ENCODE measurements at regions of chr15 and their contacts with region 1.

Region 1: DNA sequence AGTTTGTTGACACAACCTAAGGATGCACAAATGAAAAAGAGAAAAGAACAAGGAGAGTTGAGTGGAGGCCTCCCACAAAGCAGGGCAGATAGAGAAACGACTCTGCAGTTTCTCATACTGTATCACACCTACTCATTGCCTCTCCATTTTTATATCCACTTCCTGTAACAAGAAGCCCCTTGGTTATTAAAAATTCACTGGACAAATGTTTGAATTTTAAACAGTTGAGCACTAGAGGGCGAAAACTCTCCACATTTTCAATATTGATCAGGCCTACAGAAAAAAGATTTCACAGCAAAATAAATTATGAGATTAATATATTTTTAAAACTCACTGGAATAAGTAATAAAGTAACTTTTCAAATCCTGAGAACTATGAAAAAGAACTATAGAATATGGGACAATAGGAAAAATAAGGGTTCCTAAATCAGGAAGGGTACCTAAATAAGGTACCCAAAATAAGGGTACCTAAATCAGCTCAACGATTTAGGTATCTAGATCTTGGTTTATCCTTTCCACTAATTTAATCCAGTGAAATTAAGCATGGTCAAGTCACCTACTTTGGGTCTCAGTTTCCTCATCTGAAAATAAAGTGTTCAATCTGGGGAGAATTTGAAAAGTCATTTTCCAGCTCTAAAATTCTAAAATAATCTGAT is 47.0 kb upstream of the PPIB start:
- DNase-seq: peak in 3 of 4 experiments; percentile 17 to 39 (median 29)
- ATAC-seq: peak; percentile 67
- H3K4me3 ChIP-seq: no peak overlapping the region
- H3K27ac ChIP-seq: no peak overlapping the region
- H3K4me1 ChIP-seq: peaks cover 3 to 9% of the 10 kb centered on the region in 2 experiments; a peak in 2 of 5 replicates
- H3K27me3 ChIP-seq: no peaks in the 10 kb centered on the region
- CTCF ChIP-seq: peak; percentile 42 to 72 (median 50); a peak in 5 of 6 replicates
- EP300 ChIP-seq: no peak
- POLR2A ChIP-seq: no peak
- RAD21 ChIP-seq: peak; percentile 77 to 80

Region 2: DNA sequence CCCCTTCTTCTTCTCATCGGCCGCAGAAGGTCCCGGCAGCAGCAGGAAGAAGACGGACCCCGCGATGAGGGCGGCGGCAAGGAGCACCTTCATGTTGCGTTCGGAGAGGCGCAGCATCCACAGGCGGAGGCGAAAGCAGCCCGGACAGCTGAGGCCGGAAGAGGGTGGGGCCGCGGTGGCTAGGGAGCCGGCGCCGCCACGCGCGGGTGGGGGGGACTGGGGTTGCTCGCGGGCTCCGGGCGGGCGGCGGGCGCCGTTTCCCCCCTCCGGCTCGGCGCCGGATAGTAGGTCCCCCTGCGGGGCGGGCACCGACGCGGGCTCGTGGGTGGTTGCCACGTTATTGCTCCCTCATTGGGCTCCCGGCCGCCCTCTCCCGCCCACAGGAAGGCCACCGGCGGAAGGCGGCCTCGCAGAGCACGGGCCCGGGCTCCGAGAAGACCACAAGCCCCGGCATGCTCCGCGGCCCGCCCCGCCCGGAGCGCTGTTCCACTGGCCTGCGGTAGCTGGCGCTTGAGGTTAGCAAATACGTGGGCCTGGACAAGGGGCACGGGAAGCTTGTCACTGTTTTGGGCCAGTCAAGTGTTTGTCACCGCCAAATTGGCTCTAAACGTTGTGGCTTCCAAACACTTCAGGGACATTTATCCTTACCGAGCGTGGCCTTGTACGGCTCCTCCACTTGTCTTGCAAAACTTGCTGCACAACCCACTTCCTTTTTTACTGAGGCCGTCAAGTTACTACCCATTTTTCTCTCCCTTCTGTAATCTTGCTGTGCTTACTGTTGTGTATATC is 46.7 kb before region 1 on chr15 and contains the start of gene PPIB:
- CTCF ChIA-PET with region 1: no interaction called
- POLR2A ChIA-PET with region 1: no interaction called
- in situ Hi-C with region 1: no loop called
- intact Hi-C with region 1: loop called (anchors 5 kb)
- DNase-seq: peak; percentile 95 to 98 (median 96)
- ATAC-seq: peak; percentile 98
- H3K4me3 ChIP-seq: peak within 1 kb of the TSS; percentile 92
- H3K27ac ChIP-seq: peak within 1 kb of the TSS; percentile 93
- H3K4me1 ChIP-seq: peaks cover 16 to 27% of the 10 kb centered on the region in 2 experiments; a peak in 3 of 5 replicates
- H3K27me3 ChIP-seq: no peaks in the 10 kb centered on the region
- CTCF ChIP-seq: peak; percentile 82 to 88 (median 86)
- EP300 ChIP-seq: no peak
- POLR2A ChIP-seq: peak; percentile 98
- RAD21 ChIP-seq: peak; percentile 61 to 80
- polyA plus RNA-seq, gene PPIB: 652 to 746 TPM

Region 3: GRCh38 chr15:64355944-64356709 is 146.3 kb after region 1 on chr15 and contains the start of gene CSNK1G1:
- CTCF ChIA-PET with region 1: interaction called, 22 read pairs
- POLR2A ChIA-PET with region 1: no interaction called
- in situ Hi-C with region 1: loop called (anchors 10 kb)
- intact Hi-C with region 1: loop called (anchors 1 kb)
- DNase-seq: peak; percentile 89 to 99 (median 92)
- ATAC-seq: peak; percentile 98
- H3K4me3 ChIP-seq: peak within 1 kb of the TSS; percentile 82
- H3K27ac ChIP-seq: peak within 1 kb of the TSS; percentile 77
- H3K4me1 ChIP-seq: peaks cover 7 to 13% of the 10 kb centered on the region in 2 experiments; a peak in 4 of 5 replicates
- H3K27me3 ChIP-seq: no peaks in the 10 kb centered on the region
- CTCF ChIP-seq: peak; percentile 45 to 92 (median 92); a peak in 4 of 6 replicates
- EP300 ChIP-seq: no peak
- POLR2A ChIP-seq: peak; percentile 74
- RAD21 ChIP-seq: peak; percentile 76 to 78
- polyA plus RNA-seq, gene CSNK1G1: 4.5 to 4.9 TPM

Region 4: GRCh38 chr15:64651573-64652260 is 441.9 kb after region 1 on chr15:
- CTCF ChIA-PET with region 1: interaction called, 6 read pairs
- POLR2A ChIA-PET with region 1: no interaction called
- in situ Hi-C with region 1: loop called (anchors 25 kb)
- intact Hi-C with region 1: no loop called
- DNase-seq: peak in 1 of 4 experiments; percentile 10
- ATAC-seq: peak; percentile 67
- H3K4me3 ChIP-seq: no peak overlapping the region
- H3K27ac ChIP-seq: no peak overlapping the region
- H3K4me1 ChIP-seq: no peaks in the 10 kb centered on the region; a peak in 2 of 5 replicates
- H3K27me3 ChIP-seq: no peaks in the 10 kb centered on the region
- CTCF ChIP-seq: no peak
- EP300 ChIP-seq: no peak
- POLR2A ChIP-seq: no peak
- RAD21 ChIP-seq: no peak

Region 5: DNA sequence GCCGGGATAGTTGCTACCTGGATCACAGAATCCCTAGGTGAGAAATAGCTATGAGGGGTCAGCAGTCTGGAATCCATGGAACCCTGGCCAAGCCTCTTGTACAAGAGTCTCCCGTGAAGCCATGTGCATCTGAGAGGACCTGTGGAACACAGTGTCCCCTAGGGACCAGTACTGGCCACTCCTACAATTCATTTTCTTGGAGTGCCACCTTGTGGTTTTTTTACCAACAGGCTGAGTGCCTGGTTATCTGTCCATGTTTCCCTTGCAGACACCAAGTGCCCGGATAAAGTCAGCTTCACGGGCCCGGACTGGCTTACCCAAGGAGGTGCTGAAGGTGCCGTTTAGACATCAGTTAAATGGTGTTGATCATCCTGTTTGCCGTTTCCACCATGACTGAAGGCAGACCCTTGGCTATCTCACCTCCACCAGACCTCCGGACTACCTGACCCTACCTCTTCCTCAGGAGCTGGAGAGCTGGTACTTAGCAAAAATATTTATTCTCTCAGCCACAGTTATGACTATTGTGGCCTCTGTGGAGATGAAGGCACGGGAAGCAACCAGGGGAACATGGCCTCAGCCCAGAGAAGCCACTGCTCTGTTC is 471.7 kb after region 1 on chr15:
- CTCF ChIA-PET with region 1: no interaction called
- POLR2A ChIA-PET with region 1: interaction called, 3 read pairs
- in situ Hi-C with region 1: no loop called
- intact Hi-C with region 1: loop called (anchors 5 kb)
- DNase-seq: peak; percentile 60 to 80 (median 70)
- ATAC-seq: peak; percentile 98
- H3K4me3 ChIP-seq: no peak overlapping the region
- H3K27ac ChIP-seq: no peak overlapping the region
- H3K4me1 ChIP-seq: no peaks in the 10 kb centered on the region; a peak in 1 of 5 replicates
- H3K27me3 ChIP-seq: no peaks in the 10 kb centered on the region
- CTCF ChIP-seq: peak; percentile 91 to 100 (median 99)
- EP300 ChIP-seq: 0 out of 2 replicates have a peak, but pooled peaks have one; percentile 5
- POLR2A ChIP-seq: no peak
- RAD21 ChIP-seq: peak; percentile 93 to 98

Region 6: DNA sequence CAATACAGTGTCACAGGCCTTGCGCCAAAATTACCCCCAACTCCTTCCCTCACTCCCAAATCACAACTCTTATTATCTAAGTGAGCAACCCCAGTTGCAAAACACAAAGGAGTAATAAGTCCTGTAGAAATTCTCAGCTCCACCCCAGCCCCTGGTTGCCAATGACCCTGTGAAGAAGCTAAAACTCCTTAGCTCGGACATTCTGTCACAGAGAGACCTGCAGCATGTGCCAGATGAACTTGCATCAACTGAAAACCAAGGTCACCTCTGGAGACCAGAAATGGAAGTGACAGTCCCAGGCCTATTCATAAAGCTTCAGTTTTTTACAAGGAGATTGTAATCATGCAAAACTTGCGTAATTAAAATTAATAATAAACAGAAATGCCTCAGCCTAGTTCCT is 510.4 kb after region 1 on chr15:
- CTCF ChIA-PET with region 1: no interaction called
- POLR2A ChIA-PET with region 1: interaction called, 5 read pairs
- in situ Hi-C with region 1: no loop called
- intact Hi-C with region 1: loop called (anchors 10 kb)
- DNase-seq: no peak
- ATAC-seq: no peak
- H3K4me3 ChIP-seq: no peak overlapping the region
- H3K27ac ChIP-seq: no peak overlapping the region
- H3K4me1 ChIP-seq: peaks cover 0 to 7% of the 10 kb centered on the region in 2 experiments; a peak in 3 of 5 replicates
- H3K27me3 ChIP-seq: no peaks in the 10 kb centered on the region; a peak in 1 of 5 replicates
- CTCF ChIP-seq: no peak
- EP300 ChIP-seq: no peak
- POLR2A ChIP-seq: no peak
- RAD21 ChIP-seq: no peak

Measured in K562 (cell line).